ENCODE measurements at regions of chr15 and their contacts with region 1.

Region 1: GRCh38 chr15:61834076-61834697 is 226.1 kb downstream of the VPS13C start:
- DNase-seq: peak; percentile 75
- H3K4me3 Mint-ChIP-seq: no peak overlapping the region
- H3K27ac Mint-ChIP-seq: no peak overlapping the region
- H3K4me1 Mint-ChIP-seq: peaks cover 6% of the 10 kb centered on the region
- H3K27me3 Mint-ChIP-seq: peaks cover 9% of the 10 kb centered on the region

Region 2: DNA sequence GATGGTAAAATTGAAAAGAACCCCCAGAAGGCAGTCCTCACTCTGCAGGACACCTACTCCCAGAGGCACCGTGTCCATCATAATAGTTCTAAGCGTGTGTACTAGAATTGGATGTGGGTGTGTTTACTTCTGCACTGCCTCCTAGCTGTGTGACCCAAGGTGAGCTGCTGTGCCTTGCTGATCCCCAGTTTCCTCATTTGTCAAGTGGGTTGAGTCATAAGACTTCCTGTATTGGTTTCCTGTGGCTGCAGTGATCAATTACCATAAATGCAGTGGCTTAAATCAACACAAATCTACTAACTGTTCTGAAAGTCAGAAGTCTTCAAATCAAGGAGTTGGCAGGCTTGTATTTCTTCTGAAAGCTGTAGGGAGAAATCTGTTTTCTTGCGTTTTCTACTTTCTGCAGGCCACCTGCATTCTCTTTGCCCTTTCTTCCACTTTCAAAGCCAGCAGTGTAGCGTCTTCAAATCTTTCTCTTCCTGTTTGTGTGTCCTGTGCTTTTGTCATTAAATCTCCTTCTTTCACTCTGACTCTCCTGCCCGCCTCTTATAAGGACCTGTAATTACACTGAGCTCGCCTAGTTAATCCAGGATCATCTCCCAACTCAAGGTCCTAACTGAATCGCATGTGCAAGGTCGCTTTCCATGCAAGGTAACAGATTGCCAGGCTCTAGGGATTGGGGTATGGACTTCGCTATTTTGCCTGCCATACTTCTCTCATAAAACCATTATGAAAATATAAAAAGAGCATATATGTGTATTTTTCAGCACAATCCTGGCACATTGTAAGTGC is 664.1 kb before region 1 on chr15:
- CTCF ChIA-PET with region 1: interaction called, 93 read pairs
- POLR2A ChIA-PET with region 1: no interaction called
- DNase-seq: peak; percentile 66
- H3K4me3 Mint-ChIP-seq: peak overlapping the region; percentile 23
- H3K27ac Mint-ChIP-seq: peak overlapping the region; percentile 48
- H3K4me1 Mint-ChIP-seq: peaks cover 25% of the 10 kb centered on the region
- H3K27me3 Mint-ChIP-seq: peaks cover 15% of the 10 kb centered on the region

Region 3: DNA sequence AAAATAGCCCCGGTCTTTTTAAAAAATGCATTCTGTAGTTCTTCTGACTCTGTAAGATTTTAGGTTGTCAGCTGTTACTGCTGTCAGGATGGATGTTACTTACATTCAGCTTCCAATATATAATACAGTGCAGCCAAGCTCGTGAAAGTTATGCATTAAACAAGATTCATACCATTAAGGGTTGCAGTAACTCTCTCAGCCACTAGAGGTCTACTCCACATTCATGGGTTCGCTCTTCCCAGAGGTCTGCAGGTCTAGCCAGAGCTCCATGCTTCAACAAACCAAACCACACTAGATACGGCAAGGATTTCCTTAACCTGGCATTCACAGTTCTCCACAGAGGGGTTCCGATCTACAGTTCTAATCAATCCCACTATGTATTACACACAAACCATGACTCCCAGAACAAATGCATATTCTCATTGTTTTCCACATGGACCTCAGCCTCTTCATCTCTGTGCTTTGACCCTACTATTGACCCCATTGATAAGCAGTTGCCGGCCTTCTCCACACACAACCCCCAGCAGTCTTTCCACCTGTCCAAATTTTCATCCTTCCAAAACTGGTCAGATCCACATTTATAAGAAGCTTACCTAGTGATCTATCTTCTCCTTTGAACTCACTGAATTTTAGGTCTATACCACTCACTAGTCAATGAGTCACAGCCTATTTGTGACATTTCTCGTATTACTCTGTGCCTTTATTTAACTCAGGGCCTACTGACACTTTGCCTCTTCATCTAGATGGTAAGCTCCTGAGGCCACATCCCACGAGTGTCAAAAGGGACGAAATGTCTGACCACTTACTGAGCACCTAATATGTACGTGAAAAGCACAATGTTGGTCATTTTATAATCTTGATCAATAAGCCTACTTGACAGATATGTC is 638.8 kb before region 1 on chr15:
- CTCF ChIA-PET with region 1: interaction called, 11 read pairs
- POLR2A ChIA-PET with region 1: no interaction called
- DNase-seq: no peak
- H3K4me3 Mint-ChIP-seq: no peak overlapping the region
- H3K27ac Mint-ChIP-seq: no peak overlapping the region
- H3K4me1 Mint-ChIP-seq: no peaks in the 10 kb centered on the region
- H3K27me3 Mint-ChIP-seq: peaks cover 20% of the 10 kb centered on the region

Region 4: DNA sequence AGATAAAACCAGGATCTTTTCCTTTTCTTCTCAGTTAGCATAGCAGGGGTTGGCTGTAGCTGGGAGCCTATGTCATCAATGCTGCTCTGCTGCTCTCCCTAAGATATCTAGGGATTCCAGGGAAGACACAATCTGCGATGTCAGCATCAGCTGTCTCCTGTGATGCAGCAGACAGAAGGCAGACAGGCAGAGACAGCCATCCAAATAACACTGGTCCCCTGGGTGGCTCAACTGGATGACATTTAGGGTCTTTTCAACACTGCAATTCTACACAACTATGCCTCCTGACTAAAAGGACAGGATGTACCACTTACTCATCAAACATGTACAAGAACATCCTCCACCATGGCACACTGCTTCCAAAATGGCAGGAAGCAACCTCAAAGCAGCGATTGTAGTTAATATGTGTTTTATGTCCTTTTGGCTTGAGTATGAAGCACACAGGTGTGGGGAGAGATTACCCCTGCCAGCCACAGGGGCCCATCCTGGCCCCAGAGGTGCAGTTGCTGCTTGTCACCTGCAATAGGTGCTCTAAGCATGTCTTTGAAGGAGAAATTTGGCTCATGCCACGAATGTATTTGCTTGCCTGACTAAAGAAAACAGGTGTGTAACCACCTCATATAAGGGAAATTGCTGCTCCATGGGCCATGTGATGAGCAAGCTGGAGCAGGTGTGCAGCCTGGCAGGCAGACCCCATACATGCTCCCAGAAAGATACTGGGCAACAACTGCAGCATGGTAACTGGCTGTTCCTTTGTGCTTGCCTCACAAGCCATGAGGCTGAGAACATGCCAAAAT is 131.8 kb before region 1 on chr15:
- CTCF ChIA-PET with region 1: no interaction called
- POLR2A ChIA-PET with region 1: no interaction called
- DNase-seq: no peak
- H3K4me3 Mint-ChIP-seq: no peak overlapping the region
- H3K27ac Mint-ChIP-seq: no peak overlapping the region
- H3K4me1 Mint-ChIP-seq: no peaks in the 10 kb centered on the region
- H3K27me3 Mint-ChIP-seq: peaks cover 8% of the 10 kb centered on the region

Region 5: GRCh38 chr15:61819386-61819785 is 14.8 kb before region 1 on chr15:
- CTCF ChIA-PET with region 1: interaction called, 16 read pairs
- POLR2A ChIA-PET with region 1: no interaction called
- DNase-seq: no peak
- H3K4me3 Mint-ChIP-seq: no peak overlapping the region
- H3K27ac Mint-ChIP-seq: no peak overlapping the region
- H3K4me1 Mint-ChIP-seq: no peaks in the 10 kb centered on the region
- H3K27me3 Mint-ChIP-seq: peaks cover 12% of the 10 kb centered on the region

Region 6: DNA sequence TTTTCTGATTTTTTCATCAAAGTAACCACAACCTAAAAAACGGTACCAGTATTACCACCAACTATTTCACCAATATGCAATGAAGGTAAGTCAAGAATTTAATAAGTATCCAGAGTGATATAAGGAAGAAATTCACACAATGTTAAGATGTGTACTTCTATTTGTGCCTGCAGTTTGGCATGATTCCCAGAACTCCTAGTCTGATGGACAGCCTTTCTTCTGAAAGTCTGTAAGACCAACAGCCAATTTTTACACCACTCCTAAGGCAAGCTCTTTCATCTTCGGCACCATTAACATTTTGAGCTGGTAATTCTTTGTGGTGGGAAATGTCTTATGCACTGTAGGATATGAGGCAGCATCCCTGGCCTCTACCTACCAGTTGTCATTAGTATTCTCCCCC is 117.8 kb after region 1 on chr15:
- CTCF ChIA-PET with region 1: no interaction called
- POLR2A ChIA-PET with region 1: no interaction called
- DNase-seq: no peak
- H3K4me3 Mint-ChIP-seq: no peak overlapping the region
- H3K27ac Mint-ChIP-seq: no peak overlapping the region
- H3K4me1 Mint-ChIP-seq: no peaks in the 10 kb centered on the region
- H3K27me3 Mint-ChIP-seq: no peaks in the 10 kb centered on the region